Calu3 (cell line): ENCODE measurements at regions of chr6 and their contacts with region 1.

Region 1: GRCh38 chr6:34745277-34746103 is 11.8 kb upstream of the SNRPC start:
- DNase-seq: peak; percentile 94
- H3K4me3 Mint-ChIP-seq: peak overlapping the region; percentile 50
- H3K27ac Mint-ChIP-seq: peak overlapping the region; percentile 89
- H3K4me1 Mint-ChIP-seq: peaks cover 41% of the 10 kb centered on the region
- H3K27me3 Mint-ChIP-seq: no peaks in the 10 kb centered on the region
- CTCF ChIP-seq: no peak

Region 2: DNA sequence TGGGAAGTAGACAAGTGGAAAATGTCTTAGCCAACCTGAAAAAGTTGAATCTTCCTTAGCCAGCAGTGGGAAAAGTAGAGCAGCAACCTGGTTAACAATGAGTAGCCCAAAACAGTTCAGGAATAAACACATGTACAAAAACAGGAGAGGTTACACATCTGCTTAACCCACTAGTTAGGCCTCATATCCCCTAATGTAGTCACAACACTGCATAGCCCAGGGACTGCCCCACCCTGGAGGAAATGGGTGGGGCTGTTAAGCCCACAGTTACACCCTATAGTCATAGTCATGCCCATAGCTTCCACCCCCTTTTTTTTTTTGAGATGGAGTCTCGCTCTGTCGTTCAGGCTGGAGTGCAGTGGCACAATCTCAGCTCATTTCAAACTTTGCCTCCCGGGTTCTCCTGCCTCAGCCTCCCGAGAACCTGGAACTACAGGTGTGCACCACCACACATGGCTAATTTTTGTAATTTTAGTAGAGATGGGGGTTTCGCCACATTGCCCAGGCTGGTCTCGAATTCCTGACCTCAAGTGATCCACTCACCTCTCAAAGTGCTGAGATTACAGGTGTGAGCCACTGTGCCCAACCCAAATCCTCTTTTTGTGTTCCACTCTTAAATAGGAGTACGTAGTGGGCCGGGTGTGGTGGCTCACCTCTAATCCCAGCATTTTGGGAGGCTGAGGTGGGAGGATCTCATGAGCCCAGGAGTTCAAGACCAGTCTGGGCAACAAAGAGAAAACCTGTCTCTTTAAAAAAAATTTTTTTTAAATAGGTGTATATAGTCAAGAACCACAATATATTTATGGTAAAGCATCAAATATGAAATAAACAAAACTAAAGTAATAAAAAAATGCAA is 73.5 kb before region 1 on chr6:
- CTCF ChIA-PET with region 1: interaction called, 11 read pairs
- intact Hi-C with region 1: no loop called
- DNase-seq: peak; percentile 47
- H3K4me3 Mint-ChIP-seq: no peak overlapping the region
- H3K27ac Mint-ChIP-seq: peak overlapping the region; percentile 61
- H3K4me1 Mint-ChIP-seq: peaks cover 56% of the 10 kb centered on the region
- H3K27me3 Mint-ChIP-seq: no peaks in the 10 kb centered on the region
- CTCF ChIP-seq: no peak

Region 3: DNA sequence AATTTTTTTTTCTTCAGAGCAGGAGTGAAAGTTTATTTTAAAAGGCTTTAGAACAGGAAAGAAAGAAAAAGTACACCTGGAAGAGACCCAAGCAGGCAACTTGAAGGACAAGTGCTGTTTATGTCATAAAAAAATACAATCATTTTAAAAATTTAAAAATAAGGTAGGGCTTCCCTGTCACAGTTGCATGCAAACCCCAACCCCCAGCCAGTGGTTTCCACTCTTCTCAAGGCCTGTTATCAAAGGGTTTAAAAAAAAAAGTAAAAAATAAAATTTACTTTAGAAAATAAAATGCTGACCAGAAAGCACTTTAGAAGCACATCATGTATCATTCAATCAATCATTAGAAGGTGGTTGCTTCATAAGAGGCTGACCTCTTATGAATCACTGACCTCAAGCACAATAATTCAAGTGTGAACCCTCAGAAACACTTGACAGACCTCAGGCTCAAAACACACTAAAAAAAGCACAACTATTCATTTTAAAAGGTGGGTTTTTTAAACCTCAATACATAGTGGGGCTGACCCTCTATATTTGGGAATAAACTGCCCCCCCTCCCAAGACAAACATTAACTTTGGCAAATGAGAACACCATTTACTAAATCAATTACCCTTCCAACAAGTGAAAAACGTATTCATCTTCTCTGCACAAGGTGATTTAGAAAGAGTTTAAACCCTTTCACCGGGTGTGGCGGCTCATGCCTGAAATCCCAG is 64.5 kb before region 1 on chr6:
- CTCF ChIA-PET with region 1: no interaction called
- intact Hi-C with region 1: loop called (anchors 5 kb)
- DNase-seq: peak; percentile 46
- H3K4me3 Mint-ChIP-seq: peak overlapping the region; percentile 38
- H3K27ac Mint-ChIP-seq: peak overlapping the region; percentile 48
- H3K4me1 Mint-ChIP-seq: peaks cover 36% of the 10 kb centered on the region
- H3K27me3 Mint-ChIP-seq: no peaks in the 10 kb centered on the region
- CTCF ChIP-seq: no peak

Region 4: DNA sequence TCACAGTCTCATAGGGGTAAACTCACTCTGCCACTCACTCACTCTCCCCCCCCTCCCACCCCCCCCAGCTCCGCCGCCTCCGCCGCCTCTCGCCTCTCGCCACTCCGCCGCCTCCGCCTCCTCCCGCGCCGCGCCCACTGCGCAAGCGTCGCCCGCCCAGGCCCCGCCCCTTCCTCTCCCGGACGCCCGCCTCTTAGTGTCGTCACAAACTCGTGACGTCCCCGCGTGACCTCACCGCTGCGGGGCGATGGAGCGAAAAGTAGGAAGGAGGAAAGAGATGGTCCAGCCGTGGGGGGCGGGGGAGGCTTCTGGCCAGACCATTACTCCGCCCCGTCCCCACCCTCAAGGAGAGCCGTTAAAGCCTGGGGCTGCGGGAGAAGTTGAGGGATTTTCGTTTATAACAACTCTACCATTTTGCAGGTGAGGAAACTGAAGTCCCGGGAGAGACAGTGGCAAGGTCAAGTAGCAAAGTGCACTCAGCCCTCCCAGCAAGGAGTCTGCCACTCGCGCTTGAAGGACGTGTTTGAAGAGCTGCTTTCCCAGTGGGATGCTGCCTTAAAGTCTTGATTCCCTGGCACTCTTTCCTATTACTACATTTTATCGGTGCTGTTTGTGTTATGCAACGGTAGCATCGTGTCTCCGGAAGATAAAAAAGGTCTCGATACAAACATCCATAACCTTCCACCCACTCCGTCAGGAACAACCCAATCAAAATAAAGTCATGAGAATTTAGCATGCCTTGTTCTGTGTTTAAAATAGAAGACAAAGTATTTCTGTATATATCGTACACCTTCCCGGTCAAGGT is 48.5 kb before region 1 on chr6 and contains the start of gene ILRUN:
- CTCF ChIA-PET with region 1: interaction called, 3 read pairs
- intact Hi-C with region 1: loop called (anchors 5 kb)
- DNase-seq: peak; percentile 100
- H3K4me3 Mint-ChIP-seq: peak within 1 kb of the TSS; percentile 92
- H3K27ac Mint-ChIP-seq: peak within 1 kb of the TSS; percentile 71
- H3K4me1 Mint-ChIP-seq: peaks cover 29% of the 10 kb centered on the region
- H3K27me3 Mint-ChIP-seq: no peaks in the 10 kb centered on the region
- CTCF ChIP-seq: no peak
- total RNA-seq, gene ILRUN: 137 and 145 TPM in 2 replicates